HEK293T (cell line): ENCODE measurements at regions of chr15 and their contacts with region 1.

Region 1: GRCh38 chr15:74768771-74769342 is 13.0 kb upstream of the CSK start:
- DNase-seq: peak; percentile 86

Region 2: DNA sequence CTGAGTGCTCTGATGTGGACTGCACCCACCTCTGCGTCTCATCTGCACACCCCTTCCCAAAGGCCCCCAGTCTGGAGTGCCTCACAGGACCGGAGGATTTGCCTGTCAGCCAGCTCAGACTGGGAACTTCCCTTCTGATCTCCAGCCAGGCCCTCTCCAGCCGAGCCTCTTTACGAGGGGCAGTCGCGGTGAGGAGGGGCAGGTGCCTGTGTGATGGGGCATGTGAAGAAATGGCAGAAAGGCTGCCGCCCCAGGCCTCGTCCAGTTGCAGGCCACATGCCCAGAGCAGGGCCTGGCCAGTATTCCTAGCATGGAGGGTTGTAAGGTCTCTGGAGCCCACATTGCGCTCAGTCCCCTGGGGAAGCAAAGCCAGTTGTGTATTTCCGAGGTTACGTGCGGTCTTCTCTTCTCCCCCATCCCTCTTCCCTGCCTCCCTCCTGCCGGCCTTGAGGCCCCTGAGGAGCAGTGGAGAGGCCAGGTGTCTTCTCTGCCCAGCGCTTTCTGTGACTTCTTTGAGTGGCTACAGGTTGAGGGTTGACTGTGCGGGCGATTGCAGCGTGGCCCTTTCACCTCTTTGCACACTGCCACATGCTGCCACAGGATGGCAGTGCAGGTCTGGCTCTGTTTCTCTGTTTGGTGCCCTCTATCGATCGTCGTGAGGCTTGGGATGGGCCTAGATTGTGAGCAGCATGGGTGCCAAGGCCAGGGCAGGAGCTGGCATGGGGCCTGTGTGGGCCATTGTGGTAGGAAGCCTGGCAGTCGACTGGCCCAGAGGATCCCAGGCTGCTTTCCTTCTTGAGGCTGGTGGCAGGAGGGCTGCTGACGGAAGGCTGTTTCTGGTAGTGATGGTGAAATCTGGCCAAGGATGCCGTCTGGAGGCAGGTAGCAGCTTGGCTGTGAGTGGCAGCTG is 148.0 kb before region 1 on chr15:
- CTCF ChIA-PET with region 1: interaction called, 14 read pairs
- POLR2A ChIA-PET with region 1: no interaction called
- DNase-seq: peak; percentile 83

Region 3: GRCh38 chr15:74642729-74643367 is 126.0 kb before region 1 on chr15:
- CTCF ChIA-PET with region 1: interaction called, 205 read pairs
- POLR2A ChIA-PET with region 1: interaction called, 3 read pairs
- DNase-seq: no peak

Region 4: DNA sequence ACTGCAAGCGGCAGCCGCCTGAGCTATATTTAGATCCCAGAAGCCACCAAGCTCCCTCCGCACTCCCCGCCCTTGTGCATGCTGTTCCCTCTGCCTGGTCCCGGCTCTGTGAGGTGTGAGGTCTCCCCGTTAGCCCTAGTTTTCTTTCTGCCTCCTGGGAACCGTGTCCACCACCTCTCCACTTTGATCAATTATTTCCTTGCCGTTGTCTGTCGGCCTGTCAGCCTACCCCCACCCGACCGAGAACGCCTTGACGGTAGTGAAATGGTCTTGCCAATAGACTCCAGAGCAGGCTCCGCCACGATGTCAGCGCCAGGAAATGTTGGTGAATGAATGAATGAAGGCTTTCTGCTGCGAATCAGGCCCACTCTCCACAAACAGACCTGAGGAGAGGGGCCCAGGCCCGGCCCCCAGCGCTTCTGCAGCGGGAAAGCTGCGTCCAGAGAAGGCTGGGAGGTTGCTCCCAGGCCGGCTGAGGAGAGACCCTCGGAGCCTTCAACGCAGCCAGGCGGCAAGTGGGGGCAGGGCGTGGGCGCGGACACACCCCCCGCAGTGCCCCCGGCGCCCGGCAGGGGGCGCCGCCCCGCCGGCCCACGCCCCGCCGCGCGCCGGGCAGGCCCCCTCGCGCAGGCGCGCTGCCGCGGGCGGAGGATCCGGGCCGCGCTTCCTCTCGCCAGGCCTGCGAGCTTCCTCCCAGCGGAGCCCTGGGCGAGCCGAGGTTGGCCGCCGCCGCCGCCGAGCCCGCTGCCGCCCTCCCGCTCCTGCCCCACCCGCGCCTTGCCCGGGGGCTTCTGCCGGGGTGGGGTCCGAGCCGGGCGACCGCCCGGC is 12.8 kb after region 1 on chr15 and contains the start of gene CSK:
- CTCF ChIA-PET with region 1: interaction called, 75 read pairs
- POLR2A ChIA-PET with region 1: interaction called, 7 read pairs
- DNase-seq: peak; percentile 98

Region 5: DNA sequence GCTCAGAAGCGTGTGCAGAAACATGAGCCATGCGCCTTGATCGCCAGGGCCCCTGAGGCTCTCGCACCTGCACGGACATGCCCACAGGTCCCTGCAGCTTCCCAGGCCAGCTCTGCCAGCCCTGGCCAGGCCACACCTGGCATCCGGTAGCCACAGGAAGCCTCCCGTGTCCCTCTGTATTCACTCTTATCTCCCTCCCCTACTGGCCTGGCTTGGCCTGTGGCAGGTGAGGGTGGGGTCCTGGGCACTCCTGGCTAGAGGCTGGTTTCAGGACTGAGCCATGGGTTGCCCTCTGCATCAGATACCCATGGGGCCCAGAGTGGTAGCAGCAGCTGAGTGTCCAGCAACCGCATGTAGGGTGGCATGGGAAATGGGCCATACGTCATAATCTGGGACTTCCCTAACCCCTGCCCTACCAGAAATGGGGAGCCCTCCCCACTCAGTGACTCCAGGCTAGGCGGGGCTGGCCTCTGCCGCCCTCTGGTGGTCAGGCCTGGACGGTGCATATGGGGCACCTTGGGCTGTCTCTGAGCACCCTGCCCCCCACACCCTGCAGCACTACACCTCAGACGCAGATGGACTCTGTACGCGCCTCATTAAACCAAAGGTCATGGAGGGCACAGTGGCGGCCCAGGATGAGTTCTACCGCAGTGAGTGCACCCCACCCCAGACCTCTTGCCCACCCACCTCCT is 31.1 kb after region 1 on chr15:
- CTCF ChIA-PET with region 1: interaction called, 12 read pairs
- POLR2A ChIA-PET with region 1: no interaction called
- DNase-seq: peak; percentile 93

Region 6: GRCh38 chr15:74906446-74907162 is 137.7 kb after region 1 on chr15 and contains the start of gene FAM219B:
- CTCF ChIA-PET with region 1: interaction called, 13 read pairs
- POLR2A ChIA-PET with region 1: interaction called, 4 read pairs
- DNase-seq: peak; percentile 98

Region 7: GRCh38 chr15:74956648-74957300 is 187.9 kb after region 1 on chr15 and contains the start of gene RPP25:
- CTCF ChIA-PET with region 1: interaction called, 24 read pairs
- POLR2A ChIA-PET with region 1: interaction called, 5 read pairs
- DNase-seq: peak; percentile 88